ENCODE measurements at regions of chr17 and their contacts with region 1.

Region 1: DNA sequence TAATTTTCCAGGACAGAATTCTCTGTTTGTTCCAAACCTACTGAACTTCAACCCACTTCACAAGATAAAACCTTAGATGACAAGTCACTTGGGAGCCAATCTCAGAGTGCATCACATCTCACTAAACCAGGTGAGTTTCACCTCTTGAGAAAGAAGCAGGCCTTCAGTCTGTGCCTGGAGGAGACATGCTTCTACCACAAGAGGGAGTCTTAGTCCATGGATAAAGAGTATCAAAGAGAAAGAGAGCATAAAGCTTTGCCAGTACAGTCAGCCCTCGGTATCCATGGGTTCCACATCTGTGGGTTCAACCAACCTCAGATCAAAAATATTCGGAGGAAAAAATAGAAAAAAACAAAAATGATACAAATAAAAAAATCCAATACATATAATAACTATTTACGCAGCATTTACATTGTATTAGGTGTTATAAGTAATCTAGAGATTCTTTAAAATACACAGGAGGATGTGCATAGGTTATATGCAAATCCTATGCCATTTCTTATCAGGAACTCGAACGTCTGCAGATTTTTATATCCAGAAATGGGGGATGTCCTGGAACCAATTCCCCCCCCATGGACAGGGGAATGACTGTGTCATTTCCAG is 37.7 kb downstream of the DUSP14 start:
- DNase-seq: peak in 6 of 14 experiments; percentile 5 to 65 (median 40)
- ATAC-seq: peak; percentile 87
- H3K4me3 ChIP-seq: no peak overlapping the region
- H3K4me3 Mint-ChIP-seq: no peak overlapping the region
- H3K27ac ChIP-seq: no peak overlapping the region
- H3K27ac Mint-ChIP-seq: peak overlapping the region; percentile 37
- H3K4me1 ChIP-seq: no peaks in the 10 kb centered on the region
- H3K4me1 Mint-ChIP-seq: peaks cover 17% of the 10 kb centered on the region
- H3K27me3 ChIP-seq: no peaks in the 10 kb centered on the region
- H3K27me3 Mint-ChIP-seq: no peaks in the 10 kb centered on the region
- CTCF ChIP-seq: peak; percentile 65

Region 2: GRCh38 chr17:37770631-37771518 is 243.5 kb after region 1 on chr17:
- CTCF ChIA-PET with region 1: no interaction called
- POLR2A ChIA-PET with region 1: no interaction called
- intact Hi-C with region 1: loop called in 1 of 2 experiments (anchors 5 kb)
- DNase-seq: peak in 8 of 14 experiments; percentile 4 to 50 (median 15)
- ATAC-seq: no peak
- H3K4me3 ChIP-seq: no peak overlapping the region
- H3K4me3 Mint-ChIP-seq: no peak overlapping the region
- H3K27ac ChIP-seq: no peak overlapping the region
- H3K27ac Mint-ChIP-seq: no peak overlapping the region
- H3K4me1 ChIP-seq: peaks cover 5% of the 10 kb centered on the region
- H3K4me1 Mint-ChIP-seq: peaks cover 4% of the 10 kb centered on the region
- H3K27me3 ChIP-seq: no peaks in the 10 kb centered on the region
- H3K27me3 Mint-ChIP-seq: peaks cover 14% of the 10 kb centered on the region
- CTCF ChIP-seq: peak; percentile 25

Region 3: GRCh38 chr17:37791447-37792399 is 264.4 kb after region 1 on chr17:
- CTCF ChIA-PET with region 1: no interaction called
- POLR2A ChIA-PET with region 1: no interaction called
- intact Hi-C with region 1: loop called in 1 of 2 experiments (anchors 2 kb)
- DNase-seq: peak in 6 of 14 experiments; percentile 7 to 69 (median 44)
- ATAC-seq: no peak
- H3K4me3 ChIP-seq: no peak overlapping the region
- H3K4me3 Mint-ChIP-seq: no peak overlapping the region
- H3K27ac ChIP-seq: no peak overlapping the region
- H3K27ac Mint-ChIP-seq: no peak overlapping the region
- H3K4me1 ChIP-seq: no peaks in the 10 kb centered on the region
- H3K4me1 Mint-ChIP-seq: no peaks in the 10 kb centered on the region
- H3K27me3 ChIP-seq: peaks cover 9 to 13% of the 10 kb centered on the region in 2 experiments
- H3K27me3 Mint-ChIP-seq: peaks cover 57% of the 10 kb centered on the region
- CTCF ChIP-seq: peak; percentile 49

Region 4: DNA sequence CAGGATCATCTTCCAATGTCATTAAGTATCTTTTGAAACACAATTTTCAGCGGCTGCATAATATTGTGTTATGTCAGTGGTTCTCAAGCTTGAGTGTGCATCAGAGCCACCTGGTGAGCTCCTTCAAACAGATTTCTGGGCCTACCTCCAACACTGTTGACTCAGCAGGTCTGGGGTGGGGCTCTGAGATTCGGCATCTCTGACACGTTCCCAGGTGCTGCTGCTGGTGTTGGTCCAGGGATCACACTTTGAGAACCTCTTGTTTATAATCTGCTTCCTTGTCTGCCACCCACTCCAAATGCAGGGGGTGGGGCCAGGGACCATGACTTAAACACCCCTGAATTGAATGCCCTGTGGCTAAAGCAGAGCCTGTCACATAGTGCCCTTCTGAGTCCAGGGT is 291.3 kb after region 1 on chr17:
- CTCF ChIA-PET with region 1: no interaction called
- POLR2A ChIA-PET with region 1: no interaction called
- intact Hi-C with region 1: loop called in 1 of 2 experiments (anchors 5 kb)
- DNase-seq: no peak
- ATAC-seq: no peak
- H3K4me3 ChIP-seq: no peak overlapping the region
- H3K4me3 Mint-ChIP-seq: no peak overlapping the region
- H3K27ac ChIP-seq: no peak overlapping the region
- H3K27ac Mint-ChIP-seq: no peak overlapping the region
- H3K4me1 ChIP-seq: no peaks in the 10 kb centered on the region
- H3K4me1 Mint-ChIP-seq: no peaks in the 10 kb centered on the region
- H3K27me3 ChIP-seq: peaks cover 5 to 8% of the 10 kb centered on the region in 2 experiments
- H3K27me3 Mint-ChIP-seq: peaks cover 16% of the 10 kb centered on the region
- CTCF ChIP-seq: no peak

Region 5: DNA sequence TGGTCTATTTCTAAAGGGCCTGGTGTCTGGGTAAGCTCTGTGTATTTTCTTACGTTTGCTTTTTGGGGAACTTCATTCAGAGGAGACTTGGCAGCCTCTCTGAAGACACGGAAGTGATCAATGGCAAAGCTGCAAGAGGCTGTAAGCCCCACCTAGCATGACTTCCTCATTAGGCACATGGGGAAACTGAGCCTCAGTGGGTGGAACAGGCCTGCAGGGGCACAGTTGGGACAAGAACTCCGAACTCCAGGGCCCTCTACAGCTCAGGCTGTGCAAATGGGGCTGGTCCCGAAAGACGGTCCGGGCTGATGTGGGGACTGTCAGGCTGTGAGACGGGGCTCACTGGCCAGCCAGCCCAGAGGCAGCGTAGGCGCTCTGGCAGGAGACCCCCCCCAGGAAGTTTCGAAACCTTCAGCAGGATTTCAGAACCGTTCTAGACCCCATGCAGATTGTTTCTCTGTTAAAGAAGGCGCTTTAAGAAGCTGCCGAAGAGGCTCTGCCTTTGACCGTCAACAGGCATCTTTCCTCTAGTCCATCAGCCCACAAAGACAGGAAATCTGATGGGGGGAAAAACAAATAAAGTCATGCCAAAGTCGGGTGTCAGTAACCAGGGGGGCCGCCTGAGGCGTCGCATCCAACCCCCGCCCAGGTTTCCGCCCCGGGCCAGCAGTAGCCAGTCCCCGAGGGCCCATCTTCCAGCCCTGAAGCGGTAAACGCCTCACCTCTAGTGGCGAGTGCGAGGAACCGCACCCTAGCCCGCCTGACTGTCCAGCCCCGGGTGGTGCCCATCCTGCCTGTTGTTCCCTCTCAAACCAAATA is 317.0 kb after region 1 on chr17:
- CTCF ChIA-PET with region 1: no interaction called
- POLR2A ChIA-PET with region 1: no interaction called
- intact Hi-C with region 1: loop called in 1 of 2 experiments (anchors 10 kb)
- DNase-seq: peak in 13 of 14 experiments; percentile 6 to 62 (median 25)
- ATAC-seq: peak; percentile 69
- H3K4me3 ChIP-seq: peak overlapping the region; percentile 40
- H3K4me3 Mint-ChIP-seq: peak overlapping the region; percentile 66
- H3K27ac ChIP-seq: no peak overlapping the region
- H3K27ac Mint-ChIP-seq: no peak overlapping the region
- H3K4me1 ChIP-seq: peaks cover 12% of the 10 kb centered on the region
- H3K4me1 Mint-ChIP-seq: peaks cover 9% of the 10 kb centered on the region
- H3K27me3 ChIP-seq: peaks cover 0 to 7% of the 10 kb centered on the region in 2 experiments
- H3K27me3 Mint-ChIP-seq: peaks cover 31% of the 10 kb centered on the region
- CTCF ChIP-seq: peak; percentile 71